ENCODE measurements at regions of chr1 and their contacts with region 1.

Region 1: GRCh38 chr1:109643385-109644230 is 12.3 kb upstream of the GSTM4 start:
- DNase-seq: peak; percentile 97
- ATAC-seq: peak; percentile 93
- H3K4me3 Mint-ChIP-seq: no peak overlapping the region
- H3K27ac Mint-ChIP-seq: no peak overlapping the region
- H3K4me1 Mint-ChIP-seq: peaks cover 7% of the 10 kb centered on the region
- H3K27me3 Mint-ChIP-seq: peaks cover 5% of the 10 kb centered on the region; the same call in 1 of the 2 replicates
- CTCF ChIP-seq: peak; percentile 76; the same call in 1 of the 2 replicates

Region 2: GRCh38 chr1:109564194-109564878 is 79.3 kb before region 1 on chr1:
- CTCF ChIA-PET with region 1: interaction called, 13 read pairs
- POLR2A ChIA-PET with region 1: no interaction called
- DNase-seq: no peak
- ATAC-seq: peak; percentile 43
- H3K4me3 Mint-ChIP-seq: peak overlapping the region; percentile 46
- H3K27ac Mint-ChIP-seq: peak overlapping the region; percentile 94
- H3K4me1 Mint-ChIP-seq: peaks cover 51% of the 10 kb centered on the region
- H3K27me3 Mint-ChIP-seq: no peaks in the 10 kb centered on the region
- CTCF ChIP-seq: no peak

Region 3: GRCh38 chr1:109586055-109586454 is 57.6 kb before region 1 on chr1:
- CTCF ChIA-PET with region 1: no interaction called
- POLR2A ChIA-PET with region 1: no interaction called
- DNase-seq: no peak
- ATAC-seq: no peak
- H3K4me3 Mint-ChIP-seq: no peak overlapping the region
- H3K27ac Mint-ChIP-seq: no peak overlapping the region
- H3K4me1 Mint-ChIP-seq: no peaks in the 10 kb centered on the region
- H3K27me3 Mint-ChIP-seq: no peaks in the 10 kb centered on the region
- CTCF ChIP-seq: no peak

Region 4: GRCh38 chr1:109630081-109630897 is 13.3 kb before region 1 on chr1:
- CTCF ChIA-PET with region 1: interaction called, 80 read pairs
- POLR2A ChIA-PET with region 1: interaction called, 3 read pairs
- DNase-seq: peak; percentile 67
- ATAC-seq: peak; percentile 23
- H3K4me3 Mint-ChIP-seq: no peak overlapping the region
- H3K27ac Mint-ChIP-seq: peak overlapping the region; percentile 57; the same call in 1 of the 2 replicates
- H3K4me1 Mint-ChIP-seq: peaks cover 17% of the 10 kb centered on the region
- H3K27me3 Mint-ChIP-seq: no peaks in the 10 kb centered on the region
- CTCF ChIP-seq: peak; percentile 56; the same call in 1 of the 2 replicates

Region 5: DNA sequence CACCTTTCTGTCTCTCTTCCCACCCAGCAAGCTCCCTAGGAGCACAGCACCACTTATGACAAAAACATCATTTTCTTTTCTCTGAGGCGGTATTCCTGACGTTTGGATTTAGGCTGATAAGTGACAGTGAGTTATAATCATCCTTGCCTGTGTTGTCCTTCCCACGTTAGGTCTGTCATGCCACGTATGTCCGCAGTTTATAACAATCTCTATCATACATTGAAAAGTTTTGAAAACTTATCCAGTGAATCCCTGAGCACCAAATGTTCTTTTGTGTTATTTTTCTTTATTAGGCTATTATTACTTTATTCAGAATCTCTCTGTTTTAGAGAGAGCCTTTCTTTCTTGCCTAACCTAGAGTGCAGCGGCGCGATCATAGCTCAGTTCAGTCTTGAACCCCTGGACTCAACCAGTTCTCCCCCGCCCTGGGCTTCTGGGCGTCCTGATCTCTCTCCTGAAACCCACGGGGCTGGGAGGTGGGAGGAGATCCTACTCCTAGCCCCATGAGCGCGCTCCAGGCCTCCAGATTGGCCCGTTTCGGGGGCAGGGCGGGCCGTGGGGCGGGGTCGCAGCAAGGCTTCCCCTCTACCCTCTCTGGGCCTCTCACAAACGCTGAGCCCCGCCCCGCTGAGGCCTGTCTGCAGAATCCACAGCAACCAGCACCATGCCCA is 24.0 kb after region 1 on chr1 and contains the start of gene GSTM2:
- CTCF ChIA-PET with region 1: interaction called, 22 read pairs
- POLR2A ChIA-PET with region 1: interaction called, 5 read pairs
- DNase-seq: peak; percentile 95
- ATAC-seq: peak; percentile 100
- H3K4me3 Mint-ChIP-seq: peak within 1 kb of the TSS; percentile 68
- H3K27ac Mint-ChIP-seq: peak within 1 kb of the TSS; percentile 50
- H3K4me1 Mint-ChIP-seq: peaks cover 6% of the 10 kb centered on the region
- H3K27me3 Mint-ChIP-seq: peaks cover 3% of the 10 kb centered on the region; the same call in 1 of the 2 replicates
- CTCF ChIP-seq: no peak
- total RNA-seq, gene GSTM2: 12.9 to 15.4 TPM (median 15.3 TPM) in 3 replicates

Region 6: GRCh38 chr1:109739738-109740660 is 96.4 kb after region 1 on chr1:
- CTCF ChIA-PET with region 1: interaction called, 26 read pairs
- POLR2A ChIA-PET with region 1: no interaction called
- DNase-seq: peak; percentile 72
- ATAC-seq: peak; percentile 88
- H3K4me3 Mint-ChIP-seq: peak overlapping the region; percentile 64
- H3K27ac Mint-ChIP-seq: no peak overlapping the region
- H3K4me1 Mint-ChIP-seq: peaks cover 9% of the 10 kb centered on the region
- H3K27me3 Mint-ChIP-seq: peaks cover 70% of the 10 kb centered on the region
- CTCF ChIP-seq: no peak

Region 7: DNA sequence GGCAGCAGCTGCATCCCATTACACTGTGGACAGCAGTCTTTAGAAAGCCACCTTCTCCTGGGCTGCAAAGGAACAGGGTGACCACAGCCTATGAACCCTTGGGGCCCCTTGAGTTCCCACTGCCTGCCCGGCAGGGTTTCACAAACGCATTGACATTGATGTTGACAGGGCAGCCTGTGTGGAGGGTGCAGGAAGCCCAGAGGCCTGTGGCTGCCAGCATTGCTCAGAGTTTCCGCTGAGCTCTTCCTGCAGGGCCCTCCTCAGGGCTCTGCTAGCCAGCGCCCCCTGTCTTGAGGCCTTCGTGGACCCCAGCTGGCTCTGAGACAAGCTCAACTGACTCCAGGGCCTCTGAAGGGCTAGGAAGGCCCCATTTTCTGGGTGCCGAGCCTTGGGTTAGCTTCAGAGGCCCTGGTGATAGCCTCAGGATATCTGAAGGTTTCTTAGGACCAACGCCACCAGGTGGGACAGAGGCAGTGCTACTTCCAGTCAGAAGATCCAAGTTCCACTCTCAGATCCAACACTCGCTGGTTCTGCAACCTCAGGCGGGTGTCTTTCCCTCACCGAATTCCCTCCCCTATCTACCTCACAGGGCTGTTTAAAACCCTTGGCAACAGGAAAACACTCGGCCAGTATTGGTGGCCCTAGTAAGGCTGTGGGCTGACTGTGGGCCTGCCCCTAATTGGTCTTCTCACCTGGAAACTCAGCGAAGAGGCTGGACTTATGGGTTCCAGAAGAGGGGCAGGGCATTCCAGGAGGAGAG is 147.3 kb after region 1 on chr1:
- CTCF ChIA-PET with region 1: interaction called, 19 read pairs
- POLR2A ChIA-PET with region 1: no interaction called
- DNase-seq: peak; percentile 53
- ATAC-seq: peak; percentile 19
- H3K4me3 Mint-ChIP-seq: no peak overlapping the region
- H3K27ac Mint-ChIP-seq: no peak overlapping the region
- H3K4me1 Mint-ChIP-seq: peaks cover 34% of the 10 kb centered on the region
- H3K27me3 Mint-ChIP-seq: peaks cover 4% of the 10 kb centered on the region; the same call in 1 of the 2 replicates
- CTCF ChIP-seq: no peak